MCF 10A (cell line): ENCODE measurements at regions of chr5 and their contacts with region 1.

Region 1: DNA sequence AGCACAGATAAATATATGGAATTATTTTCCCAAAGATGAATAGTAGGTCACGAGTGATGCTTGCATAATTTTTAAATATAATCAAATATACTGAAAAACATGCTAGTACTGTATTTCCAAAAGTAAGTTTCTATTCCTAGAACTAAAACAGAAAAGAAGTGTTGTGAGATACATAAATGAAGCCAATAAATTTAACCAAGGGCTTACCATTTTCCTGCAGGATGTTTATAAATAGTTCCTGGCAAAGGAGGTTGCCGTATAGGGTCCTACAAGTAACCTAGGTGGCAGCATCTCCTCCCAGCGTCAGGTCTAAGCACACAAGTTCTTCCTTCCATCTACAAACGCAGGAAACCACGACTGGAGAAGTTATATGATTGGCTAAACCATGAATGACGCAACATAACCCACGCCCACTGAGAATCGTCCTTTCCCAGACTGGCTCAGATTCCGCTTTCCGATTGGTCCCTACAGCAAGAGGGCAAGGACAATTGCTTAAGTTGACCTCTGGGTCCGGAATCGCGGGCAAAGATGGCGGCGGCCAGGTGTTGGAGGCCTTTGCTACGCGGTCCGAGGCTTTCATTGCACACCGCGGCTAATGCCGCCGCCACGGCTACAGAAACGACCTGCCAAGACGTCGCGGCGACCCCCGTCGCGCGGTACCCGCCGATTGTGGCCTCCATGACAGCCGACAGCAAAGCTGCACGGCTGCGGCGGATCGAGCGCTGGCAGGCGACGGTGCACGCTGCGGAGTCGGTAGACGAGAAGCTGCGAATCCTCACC is at the start of gene MRPS30:
- DNase-seq: peak; percentile 100
- H3K4me3 Mint-ChIP-seq: peak within 1 kb of the TSS; percentile 97
- H3K27ac Mint-ChIP-seq: peak within 1 kb of the TSS; percentile 95
- H3K4me1 Mint-ChIP-seq: peaks cover 29% of the 10 kb centered on the region
- H3K27me3 Mint-ChIP-seq: no peaks in the 10 kb centered on the region
- CTCF ChIP-seq: peak; percentile 26
- total RNA-seq, gene MRPS30: 48.2 and 63.2 TPM in 2 replicates

Region 2: DNA sequence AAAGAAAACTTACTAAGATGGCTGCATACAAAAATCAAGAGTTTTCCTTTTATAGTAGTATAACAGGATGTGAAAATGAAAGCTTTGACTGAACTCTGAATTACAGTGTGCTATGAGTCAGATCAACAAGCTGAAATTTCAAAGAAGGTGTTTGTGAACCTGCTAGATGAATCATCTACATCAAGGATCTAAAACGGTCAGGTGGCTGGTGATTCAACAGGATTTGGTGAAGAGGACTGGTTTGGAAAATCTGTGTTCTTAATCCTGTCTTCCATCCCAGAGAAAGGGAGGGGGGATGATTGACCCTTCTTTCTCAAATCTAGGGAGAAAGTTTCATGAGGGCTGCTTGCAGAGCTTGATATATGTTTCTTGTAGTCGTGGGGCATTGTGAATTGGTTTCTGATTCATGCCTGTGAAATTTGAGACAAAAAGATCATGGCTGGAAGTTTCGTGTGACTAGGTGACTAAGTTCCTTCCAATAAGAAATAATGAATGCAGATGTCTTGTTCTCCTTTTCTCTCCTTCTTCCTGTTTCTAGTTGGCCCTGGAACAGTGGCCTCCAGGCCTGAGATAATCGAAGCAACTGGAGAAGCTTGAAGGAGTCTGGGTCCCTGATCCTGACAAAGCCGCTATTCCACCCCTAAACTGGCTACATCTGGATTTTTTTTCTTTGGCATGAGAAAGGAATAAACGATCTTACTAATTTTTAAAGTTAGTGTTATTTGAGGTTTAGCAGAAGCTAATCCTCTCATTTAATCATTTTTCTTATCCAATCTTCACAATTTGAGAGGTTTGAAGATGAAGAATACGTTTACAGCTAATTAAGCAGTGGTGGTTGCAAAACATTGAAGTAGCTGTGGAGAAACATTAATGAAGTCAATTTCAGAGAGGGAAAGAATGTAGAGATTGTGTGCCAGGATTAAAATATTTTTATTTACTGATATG is 67.3 kb after region 1 on chr5:
- CTCF ChIA-PET with region 1: no interaction called
- POLR2A ChIA-PET with region 1: interaction called, 12 read pairs
- intact Hi-C with region 1: no loop called
- DNase-seq: peak; percentile 90
- H3K4me3 Mint-ChIP-seq: peak overlapping the region; percentile 59
- H3K27ac Mint-ChIP-seq: peak overlapping the region; percentile 97
- H3K4me1 Mint-ChIP-seq: peaks cover 7% of the 10 kb centered on the region
- H3K27me3 Mint-ChIP-seq: no peaks in the 10 kb centered on the region
- CTCF ChIP-seq: no peak

Region 3: DNA sequence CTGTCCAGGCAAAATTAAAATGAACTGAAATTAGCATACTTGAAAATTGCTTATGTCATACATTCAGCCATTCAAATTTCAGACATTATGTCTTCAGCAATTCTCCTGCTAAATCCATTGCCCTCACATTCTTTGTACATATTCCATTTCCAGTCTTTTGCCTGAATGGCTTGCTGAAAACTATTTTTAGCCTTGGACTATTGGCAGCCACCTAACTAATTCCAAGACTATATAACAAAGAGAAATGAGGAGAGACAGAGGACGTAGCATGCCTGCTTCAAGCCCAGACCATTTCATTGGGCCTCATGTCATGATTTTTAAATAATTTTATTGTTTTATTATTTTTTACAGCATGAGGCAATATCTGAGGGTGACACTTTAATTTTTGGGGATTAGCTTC is 100.4 kb after region 1 on chr5:
- CTCF ChIA-PET with region 1: no interaction called
- POLR2A ChIA-PET with region 1: no interaction called
- intact Hi-C with region 1: no loop called
- DNase-seq: no peak
- H3K4me3 Mint-ChIP-seq: no peak overlapping the region
- H3K27ac Mint-ChIP-seq: no peak overlapping the region
- H3K4me1 Mint-ChIP-seq: no peaks in the 10 kb centered on the region
- H3K27me3 Mint-ChIP-seq: no peaks in the 10 kb centered on the region
- CTCF ChIP-seq: no peak

Region 4: DNA sequence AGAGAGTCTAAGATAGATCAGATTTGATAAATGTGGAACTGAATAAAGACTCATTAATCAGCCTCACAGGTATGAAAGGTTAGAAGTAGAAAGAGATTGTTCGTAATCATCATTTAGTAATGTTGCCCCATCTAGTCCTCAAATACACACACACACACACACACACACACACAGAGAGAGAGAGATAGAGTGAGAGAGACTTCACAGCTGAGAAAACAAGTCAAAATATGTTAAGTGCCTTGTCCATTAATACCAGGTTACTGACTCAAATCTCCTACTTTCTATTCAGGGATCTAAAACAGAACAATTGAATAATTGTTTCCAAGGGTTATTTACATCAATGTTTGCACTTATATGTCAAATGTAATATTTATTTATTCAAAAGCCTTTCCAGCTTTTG is 284.8 kb after region 1 on chr5:
- CTCF ChIA-PET with region 1: no interaction called
- POLR2A ChIA-PET with region 1: no interaction called
- intact Hi-C with region 1: no loop called
- DNase-seq: no peak
- H3K4me3 Mint-ChIP-seq: no peak overlapping the region
- H3K27ac Mint-ChIP-seq: no peak overlapping the region
- H3K4me1 Mint-ChIP-seq: no peaks in the 10 kb centered on the region
- H3K27me3 Mint-ChIP-seq: no peaks in the 10 kb centered on the region
- CTCF ChIP-seq: no peak